Mammary epithelial cell (primary cell): ENCODE measurements at regions of chr17 and their contacts with region 1.

Region 1: DNA sequence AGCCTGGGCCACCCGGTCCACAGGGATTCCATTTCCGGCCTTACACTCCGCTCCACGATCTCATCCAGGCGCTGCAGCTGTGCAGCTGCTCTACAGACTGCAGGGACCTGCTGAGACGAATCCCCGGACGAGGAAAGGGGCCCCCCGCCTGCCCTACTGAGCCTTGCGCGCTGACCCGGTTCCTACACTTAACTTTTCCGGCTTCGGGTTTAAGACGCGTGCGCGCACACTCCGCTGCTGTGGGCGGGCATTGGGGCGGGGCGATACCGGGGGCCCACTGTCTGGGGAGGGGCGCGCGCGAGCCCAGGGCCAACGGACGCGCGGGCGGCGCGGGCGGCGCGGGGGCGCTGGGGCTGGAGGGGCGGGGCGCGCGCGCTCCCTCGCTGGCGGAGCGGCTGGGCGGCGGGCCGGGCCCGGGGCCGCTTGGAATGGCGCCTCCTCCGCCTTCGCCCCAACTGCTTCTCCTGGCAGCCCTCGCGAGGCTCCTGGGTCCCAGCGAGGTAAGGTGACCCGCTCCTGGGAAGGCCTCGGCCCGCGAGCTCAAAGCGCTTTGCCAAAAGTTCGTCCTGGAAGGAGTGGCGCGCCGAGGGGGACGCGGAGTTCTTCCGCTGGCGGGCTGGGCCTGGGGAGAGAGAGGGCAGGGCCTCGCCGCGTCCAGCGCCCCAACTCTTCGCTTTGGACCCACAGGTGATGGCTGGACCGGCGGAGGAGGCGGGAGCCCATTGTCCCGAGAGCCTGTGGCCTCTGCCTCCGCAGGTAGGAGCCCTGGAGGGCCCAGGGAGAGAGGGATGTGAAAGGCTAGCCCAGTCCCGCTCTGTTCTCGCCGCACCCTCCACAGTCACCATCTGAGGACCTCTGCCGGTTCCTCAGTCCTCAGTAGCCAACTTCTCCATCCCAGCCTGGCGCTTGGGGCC is at the start of gene TP53I13:
- DNase-seq: peak; percentile 74
- H3K4me3 ChIP-seq: peak within 1 kb of the TSS; percentile 71 to 86 (median 74)
- H3K27ac ChIP-seq: peak within 1 kb of the TSS; percentile 10
- H3K4me1 ChIP-seq: peaks cover 27% of the 10 kb centered on the region
- H3K27me3 ChIP-seq: no peaks in the 10 kb centered on the region
- CTCF ChIP-seq: no peak
- total RNA-seq, gene TP53I13: 26.5 to 31.8 TPM

Region 2: GRCh38 chr17:29389982-29390850 is 178.4 kb before region 1 on chr17 and contains the start of gene TAOK1:
- CTCF ChIA-PET with region 1: no interaction called
- dilution Hi-C with region 1: loop called (anchors 10 kb)
- in situ Hi-C with region 1: loop called in 1 of 2 experiments (anchors 25 kb)
- intact Hi-C with region 1: no loop called
- DNase-seq: peak; percentile 96
- H3K4me3 ChIP-seq: peak within 1 kb of the TSS; percentile 68 to 92 (median 79)
- H3K27ac ChIP-seq: peak within 1 kb of the TSS; percentile 93
- H3K4me1 ChIP-seq: no peaks in the 10 kb centered on the region
- H3K27me3 ChIP-seq: no peaks in the 10 kb centered on the region
- CTCF ChIP-seq: no peak
- total RNA-seq, gene TAOK1: 57.5 to 70.0 TPM

Region 3: DNA sequence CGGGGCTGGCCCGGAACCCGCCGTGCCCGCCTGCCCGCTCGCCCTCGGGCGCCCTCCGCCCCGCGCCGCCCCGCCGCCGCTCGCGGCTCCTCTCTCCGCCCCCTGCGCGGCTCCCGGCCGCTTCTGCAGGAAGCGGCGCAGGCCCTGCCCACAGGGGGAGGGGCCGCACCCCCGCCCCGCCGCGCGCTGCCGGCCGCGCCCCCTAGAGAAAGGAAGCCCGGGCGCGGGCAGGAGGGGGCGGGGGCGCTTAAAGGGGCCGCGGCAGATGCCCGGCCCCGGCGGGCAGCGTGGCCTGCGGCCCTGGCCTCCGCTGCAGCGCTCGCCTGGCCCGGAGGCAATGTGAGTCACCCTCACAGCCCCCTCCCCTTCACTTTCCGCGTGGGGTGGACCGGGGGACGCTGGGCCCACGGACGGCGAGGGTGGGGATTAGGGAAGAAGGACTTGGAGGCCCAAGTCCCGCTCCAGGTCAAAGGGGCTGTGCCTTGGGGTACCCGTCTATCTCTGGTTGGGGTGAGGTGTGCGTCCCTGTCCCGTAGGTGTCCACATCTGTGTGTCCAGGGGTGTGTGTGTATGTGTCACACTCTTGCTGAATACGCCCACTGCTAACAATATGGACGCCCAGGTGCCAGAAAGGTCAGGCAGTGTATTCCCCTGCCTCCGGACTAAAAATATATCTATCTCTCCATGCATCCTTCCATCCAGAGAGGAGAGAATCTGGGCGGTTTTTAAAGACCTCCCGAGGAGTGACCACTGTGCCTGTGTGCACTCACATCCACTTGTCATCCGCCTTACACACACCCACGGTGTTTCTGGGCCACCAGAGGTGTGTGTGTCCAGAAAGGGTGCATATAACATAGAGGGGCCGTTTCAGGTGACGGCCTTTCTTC is 21.2 kb after region 1 on chr17 and contains the start of gene GIT1:
- CTCF ChIA-PET with region 1: interaction called, 3 read pairs
- dilution Hi-C with region 1: no loop called
- in situ Hi-C with region 1: no loop called
- intact Hi-C with region 1: loop called (anchors 1 kb)
- DNase-seq: peak; percentile 81
- H3K4me3 ChIP-seq: peak within 1 kb of the TSS; percentile 59 to 91 (median 75)
- H3K27ac ChIP-seq: peak within 1 kb of the TSS; percentile 39
- H3K4me1 ChIP-seq: peaks cover 74% of the 10 kb centered on the region
- H3K27me3 ChIP-seq: no peaks in the 10 kb centered on the region
- CTCF ChIP-seq: no peak
- total RNA-seq, gene GIT1: 41.8 to 83.4 TPM